CD4-positive, alpha-beta memory T cell (primary cell): ENCODE measurements at regions of chr2 and their contacts with region 1.

Region 1: DNA sequence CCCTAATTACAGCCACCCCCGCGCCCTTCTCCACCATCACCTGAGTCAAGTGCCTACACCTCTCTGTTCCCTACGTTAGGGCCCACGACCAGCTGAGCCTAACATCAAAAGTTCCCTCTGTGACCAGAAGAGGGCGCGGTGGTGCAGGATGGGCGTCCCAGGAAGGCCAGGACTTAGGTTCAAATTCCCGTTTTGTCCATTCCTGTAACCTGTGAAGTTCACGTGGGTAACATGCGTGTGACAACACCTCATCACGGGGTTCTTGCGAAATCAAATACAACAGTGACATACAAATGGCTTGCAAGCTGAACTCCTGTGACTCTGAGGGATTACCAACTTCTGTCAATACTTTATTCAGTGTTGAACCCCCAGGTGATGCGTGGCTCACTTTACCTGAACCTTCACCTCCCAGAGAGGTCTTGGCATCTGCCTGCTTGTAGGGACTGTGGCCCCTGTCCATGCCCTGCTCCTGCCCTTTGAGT is 207.9 kb downstream of the ARL4C start:
- DNase-seq: peak; percentile 76 to 83 (median 82)
- H3K4me3 ChIP-seq: peak overlapping the region in 1 of 2 donors; percentile 23
- H3K4me3 Mint-ChIP-seq: peak overlapping the region in 4 of 8 donors; percentile 46 to 85 (median 70)
- H3K27ac ChIP-seq: peak overlapping the region; percentile 97
- H3K27ac Mint-ChIP-seq: peak overlapping the region; percentile 93 to 100 (median 100)
- H3K4me1 ChIP-seq: peaks cover 56% of the 10 kb centered on the region
- H3K4me1 Mint-ChIP-seq: peaks cover 50 to 65% (median 58%) of the 10 kb centered on the region in 4 donors
- H3K27me3 ChIP-seq: no peaks in the 10 kb centered on the region
- H3K27me3 Mint-ChIP-seq: no peaks in the 10 kb centered on the region

Region 2: DNA sequence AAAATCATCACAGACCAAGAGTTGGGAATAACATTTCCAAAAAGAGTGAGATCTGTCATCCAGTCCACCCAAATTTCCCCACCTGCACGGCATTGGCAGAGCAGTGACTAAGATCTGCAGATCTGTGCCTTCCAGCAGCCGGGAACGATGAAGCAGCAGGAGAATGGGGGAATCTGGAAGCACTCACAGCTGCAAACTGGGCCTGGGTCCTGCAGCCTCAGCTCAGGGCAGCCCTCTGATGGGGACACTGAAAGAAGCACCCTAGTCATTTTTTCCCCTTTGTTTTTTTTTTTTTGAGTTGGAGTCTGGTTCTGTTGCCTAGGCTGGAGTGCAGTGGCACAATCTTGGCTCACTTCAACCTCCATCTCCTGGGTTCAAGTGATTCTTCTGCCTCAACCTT is 985.8 kb before region 1 on chr2:
- CTCF ChIA-PET with region 1: no interaction called
- POLR2A ChIA-PET with region 1: no interaction called
- intact Hi-C with region 1: no loop called
- DNase-seq: no peak
- H3K4me3 ChIP-seq: no peak overlapping the region
- H3K4me3 Mint-ChIP-seq: no peak overlapping the region
- H3K27ac ChIP-seq: no peak overlapping the region
- H3K27ac Mint-ChIP-seq: peak overlapping the region in 1 of 7 donors; percentile 12
- H3K4me1 ChIP-seq: no peaks in the 10 kb centered on the region
- H3K4me1 Mint-ChIP-seq: peaks cover 0 to 4% (median 2%) of the 10 kb centered on the region in 4 donors
- H3K27me3 ChIP-seq: no peaks in the 10 kb centered on the region
- H3K27me3 Mint-ChIP-seq: no peaks in the 10 kb centered on the region

Region 3: GRCh38 chr2:234135720-234136221 is 153.2 kb before region 1 on chr2:
- CTCF ChIA-PET with region 1: interaction called, 73 read pairs
- POLR2A ChIA-PET with region 1: interaction called, 24 read pairs
- intact Hi-C with region 1: loop called (anchors 2 kb)
- DNase-seq: peak; percentile 31 to 51 (median 45)
- H3K4me3 ChIP-seq: no peak overlapping the region
- H3K4me3 Mint-ChIP-seq: peak overlapping the region in 4 of 8 donors; percentile 9 to 43 (median 27)
- H3K27ac ChIP-seq: no peak overlapping the region
- H3K27ac Mint-ChIP-seq: peak overlapping the region; percentile 16 to 78 (median 57)
- H3K4me1 ChIP-seq: peaks cover 28% of the 10 kb centered on the region
- H3K4me1 Mint-ChIP-seq: peaks cover 20 to 46% (median 28%) of the 10 kb centered on the region in 4 donors
- H3K27me3 ChIP-seq: no peaks in the 10 kb centered on the region
- H3K27me3 Mint-ChIP-seq: no peaks in the 10 kb centered on the region

Region 4: DNA sequence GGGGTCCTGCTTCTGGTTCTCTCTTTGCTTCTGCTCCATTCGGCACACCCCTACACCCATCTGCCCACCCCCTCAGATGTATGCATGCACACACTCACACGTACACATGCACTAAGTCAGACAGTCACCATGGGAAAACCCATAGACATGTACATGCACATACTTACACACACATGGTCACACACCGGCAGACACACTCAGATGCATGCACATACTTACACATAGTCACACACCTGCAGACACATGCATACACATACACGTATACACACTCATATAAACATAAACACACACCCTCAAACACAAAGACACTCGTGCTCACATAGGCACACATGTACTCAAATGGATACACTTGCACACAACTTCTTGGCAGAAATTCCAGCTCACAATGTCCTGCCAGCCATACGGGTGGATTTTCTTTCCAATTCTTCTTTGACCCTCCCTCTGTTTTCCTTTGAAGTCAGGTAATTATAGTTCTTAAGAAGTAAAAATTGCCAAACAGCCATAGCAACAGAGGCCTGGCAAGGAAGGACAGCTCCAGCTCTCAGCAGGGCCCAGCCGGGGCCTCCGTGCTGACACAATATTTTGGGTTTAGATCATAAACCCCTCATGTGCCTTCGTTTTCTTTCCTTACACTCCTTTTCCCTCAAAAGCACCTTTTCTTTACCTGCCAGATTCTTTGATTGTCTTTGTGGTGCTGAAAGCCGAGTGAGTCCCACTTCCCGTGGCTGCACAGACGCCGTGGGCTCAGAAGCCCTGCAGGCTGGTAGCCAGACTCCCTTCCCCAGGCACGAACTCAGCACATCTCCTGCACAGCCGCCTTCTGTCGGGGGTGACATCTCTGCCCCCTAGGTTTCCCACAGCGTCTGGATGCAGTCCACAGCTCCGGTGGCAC is 12.2 kb after region 1 on chr2:
- CTCF ChIA-PET with region 1: interaction called, 28 read pairs
- POLR2A ChIA-PET with region 1: interaction called, 88 read pairs
- intact Hi-C with region 1: no loop called
- DNase-seq: no peak
- H3K4me3 ChIP-seq: no peak overlapping the region
- H3K4me3 Mint-ChIP-seq: peak overlapping the region; percentile 25 to 76 (median 63)
- H3K27ac ChIP-seq: peak overlapping the region; percentile 7
- H3K27ac Mint-ChIP-seq: peak overlapping the region; percentile 48 to 94 (median 75)
- H3K4me1 ChIP-seq: peaks cover 49% of the 10 kb centered on the region
- H3K4me1 Mint-ChIP-seq: peaks cover 42 to 67% (median 60%) of the 10 kb centered on the region in 4 donors
- H3K27me3 ChIP-seq: no peaks in the 10 kb centered on the region
- H3K27me3 Mint-ChIP-seq: no peaks in the 10 kb centered on the region

Region 5: DNA sequence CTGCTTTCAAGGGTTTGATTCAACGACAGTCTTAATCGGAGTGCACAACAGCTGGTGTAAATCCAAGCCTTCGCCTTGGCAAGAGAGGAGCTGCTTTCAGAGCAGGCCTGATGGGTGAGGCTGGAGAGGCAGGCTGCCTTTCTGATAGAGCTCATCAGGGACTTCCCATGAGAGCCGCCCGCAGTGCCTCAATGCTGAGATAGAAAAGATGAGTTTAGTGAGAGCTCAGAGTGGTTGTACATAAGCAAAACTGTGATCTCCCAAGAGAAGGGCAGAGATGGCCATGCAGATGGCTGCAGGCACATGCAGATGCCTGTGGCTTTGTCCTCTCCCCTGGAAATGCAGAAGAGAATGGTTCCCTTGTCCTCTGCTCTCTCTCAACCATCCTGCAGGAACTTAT is 85.7 kb after region 1 on chr2:
- CTCF ChIA-PET with region 1: interaction called, 38 read pairs
- POLR2A ChIA-PET with region 1: interaction called, 46 read pairs
- intact Hi-C with region 1: no loop called
- DNase-seq: no peak
- H3K4me3 ChIP-seq: no peak overlapping the region
- H3K4me3 Mint-ChIP-seq: no peak overlapping the region
- H3K27ac ChIP-seq: no peak overlapping the region
- H3K27ac Mint-ChIP-seq: peak overlapping the region in 4 of 7 donors; percentile 43 to 76 (median 63)
- H3K4me1 ChIP-seq: peaks cover 41% of the 10 kb centered on the region
- H3K4me1 Mint-ChIP-seq: peaks cover 24 to 60% (median 39%) of the 10 kb centered on the region in 4 donors
- H3K27me3 ChIP-seq: no peaks in the 10 kb centered on the region
- H3K27me3 Mint-ChIP-seq: no peaks in the 10 kb centered on the region

Region 6: GRCh38 chr2:234446404-234447076 is 157.5 kb after region 1 on chr2:
- CTCF ChIA-PET with region 1: interaction called, 64 read pairs
- POLR2A ChIA-PET with region 1: interaction called, 392 read pairs
- intact Hi-C with region 1: loop called (anchors 1 kb)
- DNase-seq: peak; percentile 87 to 92 (median 90)
- H3K4me3 ChIP-seq: no peak overlapping the region
- H3K4me3 Mint-ChIP-seq: peak overlapping the region; percentile 38 to 90 (median 80)
- H3K27ac ChIP-seq: peak overlapping the region; percentile 84
- H3K27ac Mint-ChIP-seq: peak overlapping the region; percentile 98 to 100 (median 100)
- H3K4me1 ChIP-seq: peaks cover 95% of the 10 kb centered on the region
- H3K4me1 Mint-ChIP-seq: peaks cover 69 to 96% (median 77%) of the 10 kb centered on the region in 4 donors
- H3K27me3 ChIP-seq: no peaks in the 10 kb centered on the region
- H3K27me3 Mint-ChIP-seq: no peaks in the 10 kb centered on the region

Region 7: GRCh38 chr2:234488913-234489451 is 200.0 kb after region 1 on chr2:
- CTCF ChIA-PET with region 1: interaction called, 163 read pairs
- POLR2A ChIA-PET with region 1: interaction called, 471 read pairs
- intact Hi-C with region 1: loop called (anchors 1 kb)
- DNase-seq: peak; percentile 81 to 94 (median 84)
- H3K4me3 ChIP-seq: peak overlapping the region in 1 of 2 donors; percentile 25
- H3K4me3 Mint-ChIP-seq: peak overlapping the region; percentile 84 to 100 (median 98)
- H3K27ac ChIP-seq: peak overlapping the region; percentile 98
- H3K27ac Mint-ChIP-seq: peak overlapping the region; percentile 97 to 100 (median 99)
- H3K4me1 ChIP-seq: peaks cover 87% of the 10 kb centered on the region
- H3K4me1 Mint-ChIP-seq: peaks cover 63 to 94% (median 81%) of the 10 kb centered on the region in 4 donors
- H3K27me3 ChIP-seq: no peaks in the 10 kb centered on the region
- H3K27me3 Mint-ChIP-seq: no peaks in the 10 kb centered on the region